ENCODE measurements at regions of chr7 and their contacts with region 1.

Region 1: DNA sequence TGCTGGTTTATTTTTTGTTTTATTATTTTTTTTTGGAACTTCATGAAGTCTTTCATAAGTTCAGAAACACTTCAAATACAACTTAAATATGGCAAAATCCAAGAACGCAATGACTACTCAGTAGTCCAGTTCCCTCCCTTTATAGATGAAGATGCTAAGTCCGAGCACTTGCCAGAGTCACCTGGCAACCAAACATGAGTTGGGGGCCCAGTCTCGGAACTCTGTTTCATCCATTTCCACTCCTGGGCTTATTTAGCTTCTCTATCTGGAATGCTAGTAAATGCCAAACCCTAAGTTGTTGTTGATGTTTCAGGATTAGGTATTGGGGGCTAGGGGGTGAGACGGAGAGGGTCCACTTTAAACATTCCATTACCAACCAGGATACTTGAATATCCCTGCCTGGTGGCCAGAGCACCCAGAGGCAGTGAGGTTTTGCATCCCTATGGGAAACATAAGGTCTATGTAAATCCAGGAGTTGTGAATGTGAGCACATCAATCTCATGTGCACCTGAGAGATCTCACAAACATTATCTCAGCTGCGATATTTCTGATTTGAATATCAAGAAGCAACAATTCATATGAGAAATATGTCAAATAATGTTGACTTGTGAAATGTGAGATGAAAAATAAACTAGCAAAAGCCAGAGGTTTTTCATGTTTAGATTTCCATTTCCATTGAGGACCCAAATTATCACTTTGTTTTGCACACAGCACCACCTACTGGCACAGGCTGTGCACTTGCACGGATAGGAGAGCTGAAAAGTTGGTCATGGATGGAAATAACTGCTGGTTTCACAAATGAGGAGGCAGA is 129.3 kb downstream of the PKD1L1 start:
- DNase-seq: peak; percentile 81 to 83
- H3K4me3 ChIP-seq: no peak overlapping the region
- H3K27ac ChIP-seq: peak overlapping the region; percentile 43
- H3K4me1 ChIP-seq: peaks cover 38% of the 10 kb centered on the region
- H3K27me3 ChIP-seq: no peaks in the 10 kb centered on the region
- CTCF ChIP-seq: peak; percentile 100

Region 2: DNA sequence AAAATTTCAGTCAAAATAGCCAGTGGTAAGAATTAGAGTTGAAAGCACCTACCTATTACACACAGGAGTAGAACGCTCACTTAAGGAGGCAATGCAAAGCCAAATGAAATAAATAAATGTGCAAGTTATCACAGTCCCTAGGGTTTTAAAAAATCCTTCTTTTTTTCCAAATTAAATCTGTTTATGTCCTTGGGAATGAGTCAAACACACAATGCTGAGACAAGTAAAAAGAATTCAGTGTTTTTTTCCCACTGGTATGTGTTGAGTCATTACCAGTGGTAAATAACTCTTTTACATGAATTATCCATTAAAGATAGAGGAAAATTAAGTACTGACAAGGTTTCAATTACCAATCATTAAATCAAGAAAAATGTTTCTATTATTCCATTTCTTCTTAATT is 675.7 kb before region 1 on chr7:
- CTCF ChIA-PET with region 1: no interaction called
- POLR2A ChIA-PET with region 1: no interaction called
- intact Hi-C with region 1: no loop called
- DNase-seq: no peak
- H3K4me3 ChIP-seq: no peak overlapping the region
- H3K27ac ChIP-seq: no peak overlapping the region
- H3K4me1 ChIP-seq: no peaks in the 10 kb centered on the region
- H3K27me3 ChIP-seq: no peaks in the 10 kb centered on the region
- CTCF ChIP-seq: no peak

Region 3: DNA sequence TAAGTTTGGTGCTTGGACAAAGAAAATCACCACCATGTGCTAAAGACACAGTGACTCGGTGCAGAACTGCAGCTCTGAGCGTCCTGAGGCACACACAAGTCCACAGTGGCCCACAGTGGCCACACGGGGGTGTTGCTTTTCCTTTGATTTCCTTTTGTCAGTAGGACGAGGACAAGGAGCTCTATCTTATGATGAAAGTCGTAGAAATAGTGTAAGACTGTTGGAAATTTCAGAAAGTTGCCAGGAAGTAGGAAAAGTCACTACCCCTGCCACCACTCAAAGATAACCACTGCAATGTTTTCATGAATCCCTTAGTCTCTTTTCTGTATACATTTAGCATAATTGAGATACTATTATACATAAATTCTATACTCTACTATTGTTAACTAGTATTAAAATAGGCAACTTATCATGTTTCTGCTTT is 383.1 kb before region 1 on chr7:
- CTCF ChIA-PET with region 1: interaction called, 5 read pairs
- POLR2A ChIA-PET with region 1: no interaction called
- intact Hi-C with region 1: loop called (anchors 1 kb)
- DNase-seq: peak in 1 of 2 experiments; percentile 60
- H3K4me3 ChIP-seq: no peak overlapping the region
- H3K27ac ChIP-seq: 0 out of 2 replicates have a peak overlapping the region, but pooled peaks have one; percentile 32
- H3K4me1 ChIP-seq: peaks cover 7% of the 10 kb centered on the region
- H3K27me3 ChIP-seq: no peaks in the 10 kb centered on the region
- CTCF ChIP-seq: peak; percentile 59

Region 4: DNA sequence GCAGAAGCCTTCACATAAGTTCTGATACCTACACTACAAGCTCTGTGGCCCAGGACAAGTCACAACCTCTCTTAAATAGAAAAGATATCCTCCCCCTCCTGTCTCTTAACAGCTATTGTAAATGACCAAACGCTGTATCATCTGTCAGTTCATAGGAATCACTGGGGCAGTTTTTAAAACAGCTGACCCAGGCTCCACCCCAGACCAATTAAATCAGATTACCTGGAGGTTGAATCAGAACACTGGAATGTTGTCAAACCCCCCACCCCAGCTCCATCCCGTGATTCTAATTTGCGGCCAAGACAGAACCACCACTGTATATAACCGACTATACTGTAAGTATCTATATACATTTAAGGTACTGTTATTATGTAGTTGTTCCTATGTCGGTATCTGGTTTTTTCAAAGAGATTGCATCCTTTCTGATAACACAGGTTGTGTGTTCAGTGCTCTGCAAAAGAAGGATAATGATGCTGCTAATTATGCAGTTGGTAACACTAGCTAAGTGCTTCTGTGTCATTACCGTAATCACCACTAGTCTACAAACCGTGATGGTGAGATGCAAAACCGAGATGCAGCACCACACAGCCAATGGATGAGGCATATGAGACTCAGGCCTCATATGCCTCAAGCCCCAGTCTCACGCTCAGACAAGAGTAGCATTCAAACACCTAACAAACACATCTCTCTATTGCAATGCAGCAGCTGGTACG is 284.5 kb before region 1 on chr7:
- CTCF ChIA-PET with region 1: no interaction called
- POLR2A ChIA-PET with region 1: no interaction called
- intact Hi-C with region 1: loop called (anchors 2 kb)
- DNase-seq: peak; percentile 76 to 89
- H3K4me3 ChIP-seq: no peak overlapping the region
- H3K27ac ChIP-seq: peak overlapping the region; percentile 52
- H3K4me1 ChIP-seq: peaks cover 84% of the 10 kb centered on the region
- H3K27me3 ChIP-seq: no peaks in the 10 kb centered on the region
- CTCF ChIP-seq: peak; percentile 62

Region 5: DNA sequence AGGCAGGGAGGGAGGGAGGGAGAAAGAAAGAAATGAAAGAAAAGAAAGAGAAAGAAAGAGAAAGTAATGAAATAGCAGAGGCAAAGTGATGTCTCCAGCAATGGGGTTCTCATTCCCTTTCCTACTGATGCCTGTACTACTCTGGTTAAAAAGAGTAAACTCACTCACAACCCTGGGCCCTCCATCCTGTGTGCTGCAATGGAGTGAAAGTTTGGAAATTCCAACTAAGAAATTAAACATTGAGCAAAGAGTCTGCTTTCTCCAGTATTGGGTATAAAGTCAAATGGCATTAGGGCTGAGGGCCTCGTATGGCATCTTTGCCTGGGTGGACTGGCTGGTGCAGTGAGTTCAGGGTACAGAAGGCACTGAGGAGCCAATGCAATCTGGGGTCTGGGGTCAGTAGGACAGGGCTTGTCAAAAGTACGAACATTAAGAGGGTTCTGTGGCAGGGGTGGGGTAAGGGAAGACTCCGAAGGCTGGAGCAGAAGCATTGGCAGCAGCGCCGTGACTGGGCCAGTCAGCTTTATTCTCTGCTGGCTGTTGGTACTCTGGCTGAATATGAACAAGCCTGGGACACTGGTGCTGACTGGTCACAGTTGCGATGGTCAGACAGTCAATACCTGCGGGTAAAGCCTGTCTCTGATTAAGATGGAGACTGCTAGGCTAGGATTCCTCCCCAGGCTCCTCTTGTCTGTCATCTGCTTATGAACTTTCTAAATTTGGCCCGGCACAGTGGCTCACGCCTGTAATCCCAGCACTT is 213.0 kb before region 1 on chr7:
- CTCF ChIA-PET with region 1: interaction called, 6 read pairs
- POLR2A ChIA-PET with region 1: no interaction called
- intact Hi-C with region 1: loop called (anchors 1 kb)
- DNase-seq: no peak
- H3K4me3 ChIP-seq: no peak overlapping the region
- H3K27ac ChIP-seq: peak overlapping the region; percentile 98
- H3K4me1 ChIP-seq: peaks cover 77% of the 10 kb centered on the region
- H3K27me3 ChIP-seq: no peaks in the 10 kb centered on the region
- CTCF ChIP-seq: no peak

Region 6: DNA sequence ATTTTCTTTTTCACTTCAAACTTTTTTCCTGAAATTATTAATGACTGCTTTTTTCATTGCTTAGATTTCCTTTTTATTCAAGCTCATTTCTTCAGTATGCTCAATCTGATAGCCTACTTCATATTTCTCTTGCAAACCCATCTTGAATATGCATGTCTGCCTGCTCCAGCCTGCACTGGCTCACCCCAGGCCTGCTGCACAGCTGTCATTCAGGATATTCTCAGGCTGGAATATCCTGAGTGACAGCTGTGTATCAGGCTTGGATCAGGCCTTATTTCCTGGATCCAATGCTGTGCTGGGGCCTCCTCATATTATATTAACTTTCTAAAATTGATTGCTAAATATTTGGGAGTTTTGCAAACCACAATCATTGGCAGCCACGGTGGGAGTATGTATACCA is 116.9 kb before region 1 on chr7:
- CTCF ChIA-PET with region 1: no interaction called
- POLR2A ChIA-PET with region 1: no interaction called
- intact Hi-C with region 1: no loop called
- DNase-seq: no peak
- H3K4me3 ChIP-seq: no peak overlapping the region
- H3K27ac ChIP-seq: no peak overlapping the region
- H3K4me1 ChIP-seq: no peaks in the 10 kb centered on the region
- H3K27me3 ChIP-seq: no peaks in the 10 kb centered on the region
- CTCF ChIP-seq: no peak

Region 7: GRCh38 chr7:47757921-47758411 is 61.0 kb before region 1 on chr7:
- CTCF ChIA-PET with region 1: no interaction called
- POLR2A ChIA-PET with region 1: no interaction called
- intact Hi-C with region 1: loop called (anchors 1 kb)
- DNase-seq: no peak
- H3K4me3 ChIP-seq: no peak overlapping the region
- H3K27ac ChIP-seq: no peak overlapping the region
- H3K4me1 ChIP-seq: peaks cover 38% of the 10 kb centered on the region
- H3K27me3 ChIP-seq: no peaks in the 10 kb centered on the region
- CTCF ChIP-seq: no peak